ENCODE measurements at regions of chr13 and their contacts with region 1.

Region 1: GRCh38 chr13:37460166-37460565 is 138.4 kb downstream of the POSTN start:
- DNase-seq: no peak
- ATAC-seq: no peak
- H3K4me3 ChIP-seq: no peak overlapping the region
- H3K27ac ChIP-seq: no peak overlapping the region
- H3K4me1 ChIP-seq: no peaks in the 10 kb centered on the region
- H3K27me3 ChIP-seq: no peaks in the 10 kb centered on the region
- CTCF ChIP-seq: no peak

Region 2: GRCh38 chr13:37446503-37446902 is 13.7 kb before region 1 on chr13:
- intact Hi-C with region 1: loop called in 1 of 10 experiments (anchors 2 kb)
- DNase-seq: no peak
- ATAC-seq: peak in 1 of 8 donors; percentile 91
- H3K4me3 ChIP-seq: no peak overlapping the region
- H3K27ac ChIP-seq: no peak overlapping the region
- H3K4me1 ChIP-seq: no peaks in the 10 kb centered on the region
- H3K27me3 ChIP-seq: no peaks in the 10 kb centered on the region
- CTCF ChIP-seq: no peak

Region 3: GRCh38 chr13:37510441-37510840 is 50.3 kb after region 1 on chr13:
- intact Hi-C with region 1: no loop called
- DNase-seq: no peak
- ATAC-seq: no peak
- H3K4me3 ChIP-seq: no peak overlapping the region
- H3K27ac ChIP-seq: no peak overlapping the region
- H3K4me1 ChIP-seq: no peaks in the 10 kb centered on the region
- H3K27me3 ChIP-seq: no peaks in the 10 kb centered on the region
- CTCF ChIP-seq: no peak